Posterior cingulate gyrus (tissue), 11 donors: ENCODE measurements at regions of chr22 and their contacts with region 1.

Region 1: DNA sequence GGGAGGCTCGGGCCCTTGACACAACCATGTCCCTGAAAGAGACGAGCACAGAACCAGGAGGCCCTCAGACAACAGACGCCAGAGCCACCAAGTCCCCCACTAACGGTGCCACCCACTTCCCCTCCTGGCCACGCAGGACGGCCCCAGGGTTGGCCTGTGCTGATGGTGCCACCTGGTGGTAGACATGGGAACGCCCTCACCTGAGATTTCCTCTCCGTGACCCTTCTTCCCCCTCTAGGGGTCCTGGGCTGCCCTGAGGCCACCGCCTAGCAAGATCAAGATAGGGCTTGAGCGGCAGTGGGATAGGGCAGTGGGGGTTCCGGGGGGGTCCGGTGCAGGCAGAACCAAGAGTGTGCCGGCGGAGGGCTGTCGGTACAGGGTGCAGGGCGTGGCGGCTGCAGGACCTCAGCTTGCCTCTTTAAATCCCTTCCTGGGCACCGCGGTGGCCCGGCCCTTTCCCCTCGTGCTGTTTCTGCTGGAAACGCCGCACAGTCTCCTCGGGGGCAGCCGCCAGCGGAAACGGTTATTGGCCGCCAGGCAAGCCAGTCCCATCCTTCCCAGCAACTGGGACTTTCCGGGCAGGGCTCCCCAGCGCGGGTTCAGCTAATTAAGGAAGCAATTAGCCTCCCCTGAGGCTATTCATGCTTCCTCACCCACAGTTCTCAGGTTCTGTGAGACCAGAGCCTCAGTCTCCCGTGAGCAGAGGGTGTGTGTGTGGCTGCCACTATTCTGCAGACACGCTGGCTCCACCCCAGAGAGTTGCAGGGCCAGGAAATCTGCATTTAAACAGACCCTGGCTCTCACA is 5.5 kb upstream of the NFAM1 start:
- DNase-seq: peak; percentile 48 to 96 (median 80)

Region 2: GRCh38 chr22:41966607-41967240 is 471.0 kb before region 1 on chr22:
- intact Hi-C with region 1: loop called (anchors 1 kb)
- DNase-seq: peak in 7 of 10 donors; percentile 37 to 93 (median 50)

Region 3: DNA sequence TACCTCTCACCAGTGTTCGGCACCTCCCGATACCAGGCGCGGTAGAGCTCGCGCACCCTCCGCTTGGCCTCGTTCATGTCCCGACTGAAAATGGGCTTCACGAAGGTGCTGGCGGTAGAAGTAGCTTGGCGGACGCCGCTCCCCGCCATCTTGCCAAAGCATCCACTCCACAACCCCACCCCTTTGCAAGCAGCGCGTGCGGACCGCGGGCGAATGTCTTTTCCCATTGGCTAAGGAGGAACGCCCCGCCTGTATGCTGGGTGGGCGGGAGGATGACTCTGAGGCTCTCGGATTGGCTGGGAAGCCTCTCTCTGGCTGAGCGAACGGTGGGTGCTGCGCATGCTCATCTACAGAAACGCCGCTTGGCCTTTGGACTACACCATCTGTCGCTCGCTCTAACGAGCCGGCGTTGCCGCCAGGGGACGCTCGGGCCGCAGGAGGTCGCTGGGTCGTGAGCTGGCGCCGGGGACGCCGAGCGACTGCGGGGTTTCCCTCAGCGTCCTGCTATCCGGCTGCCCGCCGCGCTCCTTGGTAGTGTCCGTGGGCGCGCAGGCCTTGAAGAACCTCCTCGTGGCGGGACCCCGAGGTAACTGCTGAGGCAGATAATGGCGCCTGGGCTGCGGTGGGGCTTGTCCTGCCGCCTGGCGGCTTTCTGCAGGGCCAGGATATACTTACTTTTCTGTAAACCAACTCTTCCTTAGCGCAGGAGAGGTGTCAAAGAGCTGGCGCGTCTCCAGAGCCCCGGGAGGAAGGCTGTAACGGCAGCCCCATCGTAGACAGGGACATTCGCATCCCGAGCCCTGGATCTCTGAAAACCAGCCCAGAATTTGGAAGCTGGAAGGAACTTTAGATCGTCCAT is 346.9 kb before region 1 on chr22 and contains the start of gene NDUFA6:
- intact Hi-C with region 1: loop called (anchors 1 kb)
- DNase-seq: peak; percentile 98 to 100 (median 99)

Region 4: DNA sequence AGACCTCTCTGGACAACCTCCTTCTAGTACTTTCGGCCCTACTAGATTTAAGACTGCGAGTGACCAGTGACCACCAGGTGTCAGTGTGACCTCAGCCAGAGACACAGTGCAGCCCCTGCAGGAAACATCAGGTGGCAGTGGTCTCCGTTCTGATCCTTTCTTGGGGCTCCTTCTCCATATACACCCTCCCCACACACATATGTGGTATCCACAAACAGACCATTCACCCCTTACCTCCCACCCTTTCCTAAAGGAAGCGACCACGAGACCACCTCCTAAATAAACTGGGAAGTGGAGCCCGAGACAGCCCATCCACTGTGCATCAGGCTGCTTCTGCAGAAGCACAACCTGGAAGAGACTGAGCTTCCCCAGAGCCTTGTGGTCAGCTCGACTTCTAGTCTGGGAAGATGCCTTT is 268.6 kb before region 1 on chr22:
- intact Hi-C with region 1: loop called (anchors 2 kb)
- DNase-seq: peak; percentile 47 to 95 (median 79)

Region 5: GRCh38 chr22:42277988-42278776 is 159.5 kb before region 1 on chr22:
- intact Hi-C with region 1: loop called (anchors 2 kb)
- DNase-seq: peak in 8 of 10 donors; percentile 49 to 93 (median 61)

Region 6: DNA sequence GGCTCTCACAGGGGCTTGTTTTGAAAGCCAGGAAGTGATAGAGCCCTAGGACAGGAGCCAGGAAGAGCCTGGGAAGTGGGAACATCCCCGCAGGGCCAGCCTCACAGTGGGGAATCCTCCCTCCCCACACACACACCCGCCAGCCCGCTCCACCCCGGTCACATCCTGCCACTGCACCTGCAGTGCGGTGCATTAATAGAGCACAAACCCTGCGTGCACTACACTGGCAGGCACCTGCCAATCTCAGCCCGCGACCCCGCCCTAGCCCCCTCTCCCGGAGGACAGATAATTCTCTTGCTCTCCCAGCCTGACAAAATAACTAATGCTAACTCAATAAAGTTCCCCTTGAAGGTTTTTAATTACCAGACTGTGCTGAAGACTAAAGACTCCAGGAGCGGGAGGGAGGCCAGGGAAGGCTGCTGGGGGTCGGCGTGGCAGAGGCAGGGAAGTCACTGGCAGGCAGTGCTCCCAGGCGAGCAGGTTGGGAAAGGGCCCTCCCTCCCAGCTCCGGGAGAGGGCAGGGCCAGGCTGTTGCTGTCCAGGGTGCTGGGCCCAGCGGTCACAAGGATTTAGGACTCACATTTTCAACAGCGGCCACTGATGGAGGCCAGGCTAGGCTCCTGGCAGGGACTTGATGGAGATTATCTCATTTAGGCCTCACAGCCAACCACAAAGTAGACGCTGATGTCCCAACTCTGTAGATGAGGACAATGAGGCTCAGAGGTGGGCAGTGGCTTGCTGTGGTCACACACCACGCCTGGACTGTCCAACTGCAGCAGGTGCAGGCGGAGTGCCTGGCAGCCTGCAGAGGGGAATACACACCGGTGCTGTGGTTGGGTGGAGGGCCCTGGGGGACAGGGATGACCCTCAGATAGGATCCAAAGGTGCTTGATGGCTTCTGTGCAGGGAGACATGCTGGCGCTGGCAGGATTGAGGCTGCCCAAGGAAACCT is 143.4 kb before region 1 on chr22:
- intact Hi-C with region 1: loop called (anchors 5 kb)
- DNase-seq: peak in 1 of 10 donors; percentile 85

Region 7: DNA sequence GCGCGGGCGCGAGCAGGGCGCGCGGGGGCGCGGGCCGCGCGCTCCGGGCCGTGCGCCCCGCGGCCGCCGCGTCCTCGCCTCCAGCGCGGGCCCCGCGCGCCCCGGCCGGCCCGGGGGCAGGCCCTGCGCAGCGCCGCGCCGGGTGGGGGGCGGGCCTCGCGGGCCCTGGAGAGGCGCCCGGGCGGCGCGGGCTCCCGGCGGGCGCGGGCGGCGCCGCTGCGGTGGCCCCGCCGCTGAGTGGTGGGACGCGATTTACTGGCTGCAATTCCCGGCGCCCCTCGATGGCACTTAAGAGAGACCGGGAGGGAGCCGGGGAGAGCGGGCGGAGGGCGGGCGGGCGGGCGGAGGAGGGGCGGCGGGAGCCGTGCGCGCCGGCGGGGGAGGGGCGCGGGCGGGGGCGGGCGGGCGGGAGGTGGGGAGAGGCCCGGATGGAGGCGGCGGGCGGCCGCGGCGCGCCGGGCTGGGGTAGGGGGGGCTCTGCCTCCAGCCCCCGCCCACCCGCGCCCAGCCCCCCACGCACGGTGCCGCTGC is 94.1 kb before region 1 on chr22:
- intact Hi-C with region 1: no loop called
- DNase-seq: peak in 1 of 10 donors; percentile 60

Region 8: DNA sequence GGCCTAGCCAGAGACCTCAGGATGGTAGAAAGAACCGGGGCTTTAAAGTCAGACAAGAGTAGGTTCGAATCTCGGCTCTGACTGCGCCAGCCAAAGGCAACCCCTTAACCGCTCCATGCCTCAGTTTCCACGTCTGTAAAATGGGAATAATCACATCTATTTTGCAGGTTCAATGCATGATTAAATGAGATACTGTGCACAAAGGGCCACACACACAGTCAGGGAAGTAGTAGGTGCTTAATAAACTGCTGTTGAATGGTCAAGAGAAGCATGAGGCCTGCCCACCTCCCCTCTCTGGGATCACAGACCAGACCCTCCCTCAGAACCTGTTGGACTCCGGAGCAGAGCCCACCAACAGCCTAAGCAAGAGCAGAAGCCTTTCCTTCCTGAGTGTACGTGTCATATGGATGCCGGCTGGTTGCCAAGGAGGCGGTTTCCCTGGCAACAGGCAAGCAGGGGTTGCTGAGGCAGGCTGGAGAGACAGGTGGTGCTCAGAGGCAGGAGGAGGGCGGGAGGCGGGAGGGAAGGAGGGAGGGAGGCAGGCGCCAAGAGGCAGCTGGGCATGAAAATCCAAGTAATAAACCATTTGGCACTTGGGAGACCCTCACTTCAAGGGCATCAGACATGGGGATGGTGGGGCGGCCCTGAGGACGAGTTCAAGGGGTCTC is 49.4 kb before region 1 on chr22:
- intact Hi-C with region 1: no loop called
- DNase-seq: peak in 9 of 10 donors; percentile 47 to 97 (median 84)

Region 9: GRCh38 chr22:42399315-42400271 is 38.1 kb before region 1 on chr22:
- intact Hi-C with region 1: no loop called
- DNase-seq: peak in 2 of 10 donors; percentile 29 to 49